Activated naive CD8-positive, alpha-beta T cell treated with anti-CD3 and anti-CD28 coated beads, Interleukin-2, amount 10 ng/mL, durations not matched to agents 7 days and 5 days (primary cell): ENCODE measurements at regions of chr14 and their contacts with region 1.

Region 1: GRCh38 chr14:50023671-50024490 is 92.5 kb downstream of the VCPKMT start:
- DNase-seq: no peak
- ATAC-seq: no peak
- H3K4me3 Mint-ChIP-seq: no peak overlapping the region
- H3K27ac Mint-ChIP-seq: no peak overlapping the region
- H3K4me1 Mint-ChIP-seq: peaks cover 21% of the 10 kb centered on the region
- H3K27me3 Mint-ChIP-seq: no peaks in the 10 kb centered on the region

Region 2: GRCh38 chr14:50038398-50039119 is 14.7 kb after region 1 on chr14:
- POLR2A ChIA-PET with region 1: interaction called, 10 read pairs
- DNase-seq: no peak
- ATAC-seq: peak; percentile 40
- H3K4me3 Mint-ChIP-seq: peak overlapping the region; percentile 54
- H3K27ac Mint-ChIP-seq: peak overlapping the region; percentile 98
- H3K4me1 Mint-ChIP-seq: peaks cover 53% of the 10 kb centered on the region
- H3K27me3 Mint-ChIP-seq: no peaks in the 10 kb centered on the region